Posterior cingulate gyrus (tissue), 11 donors: ENCODE measurements at regions of chr7 and their contacts with region 1.

Region 1: GRCh38 chr7:52615021-52615695 is 420.3 kb upstream of the POM121L12 start:
- DNase-seq: no peak

Region 2: GRCh38 chr7:52592698-52593097 is 22.5 kb before region 1 on chr7:
- intact Hi-C with region 1: loop called (anchors 2 kb)
- DNase-seq: no peak

Region 3: DNA sequence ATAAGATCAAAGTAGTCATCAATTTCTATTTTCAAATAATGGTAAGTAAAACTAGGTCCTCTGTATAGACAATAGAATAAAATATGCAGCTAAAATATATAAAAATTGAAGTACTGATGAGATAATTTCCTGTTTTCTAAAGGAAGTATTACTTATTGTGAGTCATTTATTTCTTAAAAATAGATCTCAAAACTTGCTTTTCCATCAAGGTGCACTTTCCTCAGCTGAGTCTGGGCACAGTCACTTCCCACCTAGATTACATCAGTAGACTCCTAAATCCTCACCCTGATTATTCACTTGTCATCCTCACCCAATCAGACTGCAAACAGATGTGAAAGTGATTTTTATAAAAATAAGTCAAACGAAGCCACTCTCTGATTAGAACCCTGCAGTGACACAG is 631.8 kb after region 1 on chr7:
- intact Hi-C with region 1: no loop called
- DNase-seq: no peak